Cardiac septum (tissue), 1 donor: ENCODE measurements at regions of chr11 and their contacts with region 1.

Region 1: GRCh38 chr11:65662799-65663638 is at the start of gene RELA:
- DNase-seq: peak; percentile 96
- total RNA-seq, gene RELA: 45.0 TPM

Region 2: GRCh38 chr11:65615229-65615941 is 47.6 kb before region 1 on chr11 and contains the start of gene PCNX3:
- intact Hi-C with region 1: loop called (anchors 2 kb)
- DNase-seq: peak; percentile 100
- total RNA-seq, gene PCNX3: 15.9 TPM

Region 3: DNA sequence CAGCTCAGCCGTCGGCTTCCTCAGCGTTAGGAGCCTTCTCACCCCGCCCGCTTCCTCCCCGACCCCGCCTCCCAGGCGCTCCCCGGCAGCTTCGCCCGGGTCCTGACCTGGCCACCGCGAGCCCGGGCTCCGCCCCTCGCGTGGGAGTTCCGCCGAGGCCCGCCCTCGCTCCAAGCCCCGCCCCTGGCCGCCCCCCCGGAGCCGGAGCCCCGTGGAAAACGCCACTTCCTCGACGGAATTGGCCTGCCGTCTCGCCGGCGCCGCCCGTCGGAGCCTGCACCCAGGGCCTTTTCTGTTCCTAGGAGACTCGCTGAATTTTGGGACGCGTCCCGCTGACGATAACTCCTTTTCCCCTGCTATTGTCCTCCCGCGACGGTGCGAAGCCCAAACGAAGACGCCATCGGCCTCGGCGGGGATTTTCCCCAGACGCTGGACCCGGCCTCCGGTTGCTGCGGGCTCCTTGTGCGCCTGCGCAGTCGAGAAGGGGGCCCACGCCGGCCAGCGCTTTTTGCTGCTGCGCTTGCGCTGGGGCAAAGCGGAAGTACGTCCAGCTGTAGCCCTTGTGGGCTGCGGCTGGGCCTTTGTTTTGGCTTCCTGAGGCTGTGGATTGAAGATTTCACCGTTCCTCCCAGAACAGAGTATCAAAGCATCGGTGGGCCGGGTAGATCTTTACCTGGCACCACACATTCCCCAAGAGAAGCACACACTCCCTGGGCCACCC is 10.3 kb before region 1 on chr11:
- intact Hi-C with region 1: loop called (anchors 1 kb)
- DNase-seq: peak; percentile 99